ENCODE measurements at regions of chr1 and their contacts with region 1.

Region 1: DNA sequence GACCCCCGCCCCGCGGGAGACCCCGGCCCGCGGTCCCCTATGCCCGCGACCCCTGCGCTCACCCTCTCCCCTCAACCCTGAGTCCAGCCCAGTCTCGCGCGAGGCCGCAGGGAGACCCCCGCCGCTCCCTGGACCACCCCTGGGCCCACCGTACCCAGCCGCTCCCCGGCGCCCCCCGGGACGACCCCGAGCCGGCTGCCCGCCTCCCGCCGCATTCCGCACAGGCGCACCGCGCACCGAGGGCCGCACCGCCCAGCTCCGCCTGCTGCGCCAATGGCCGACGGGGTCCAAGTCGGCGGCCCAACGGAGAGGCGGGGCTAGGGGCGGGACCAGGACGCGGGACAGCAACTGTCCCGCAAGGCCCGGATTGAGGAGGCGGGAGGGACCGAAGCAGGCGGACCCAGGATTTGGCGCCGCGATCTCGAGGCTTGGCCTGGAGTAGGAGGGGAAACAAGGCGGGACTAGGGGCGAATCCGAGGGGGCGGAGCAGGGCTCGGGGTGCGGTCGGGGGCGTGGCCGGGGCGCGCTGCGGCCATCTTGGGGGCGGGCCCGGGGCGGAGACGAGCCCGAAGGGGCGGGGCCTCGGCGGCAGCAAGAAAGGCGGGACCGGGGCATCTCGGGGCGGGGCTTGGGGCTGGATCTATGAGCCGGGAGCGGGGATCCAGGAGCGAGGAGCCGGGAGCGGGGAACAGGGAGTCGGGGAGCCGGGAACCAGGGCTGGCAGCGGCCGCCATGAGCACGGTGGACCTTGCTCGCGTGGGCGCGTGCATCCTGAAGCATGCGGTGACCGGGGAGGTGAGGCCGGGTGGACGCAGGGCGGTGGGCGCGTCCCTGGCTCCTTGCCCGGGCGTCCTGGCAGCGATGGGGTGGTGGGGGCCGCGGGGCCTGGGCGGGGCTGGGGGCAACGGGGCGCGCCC is at the start of gene PRXL2B:
- DNase-seq: peak; percentile 98
- H3K4me3 Mint-ChIP-seq: peak within 1 kb of the TSS; percentile 86
- H3K27ac Mint-ChIP-seq: peak within 1 kb of the TSS; percentile 94
- H3K4me1 Mint-ChIP-seq: peaks cover 40% of the 10 kb centered on the region
- H3K27me3 Mint-ChIP-seq: no peaks in the 10 kb centered on the region
- total RNA-seq, gene PRXL2B: 39.5 and 42.1 TPM in 2 replicates

Region 2: DNA sequence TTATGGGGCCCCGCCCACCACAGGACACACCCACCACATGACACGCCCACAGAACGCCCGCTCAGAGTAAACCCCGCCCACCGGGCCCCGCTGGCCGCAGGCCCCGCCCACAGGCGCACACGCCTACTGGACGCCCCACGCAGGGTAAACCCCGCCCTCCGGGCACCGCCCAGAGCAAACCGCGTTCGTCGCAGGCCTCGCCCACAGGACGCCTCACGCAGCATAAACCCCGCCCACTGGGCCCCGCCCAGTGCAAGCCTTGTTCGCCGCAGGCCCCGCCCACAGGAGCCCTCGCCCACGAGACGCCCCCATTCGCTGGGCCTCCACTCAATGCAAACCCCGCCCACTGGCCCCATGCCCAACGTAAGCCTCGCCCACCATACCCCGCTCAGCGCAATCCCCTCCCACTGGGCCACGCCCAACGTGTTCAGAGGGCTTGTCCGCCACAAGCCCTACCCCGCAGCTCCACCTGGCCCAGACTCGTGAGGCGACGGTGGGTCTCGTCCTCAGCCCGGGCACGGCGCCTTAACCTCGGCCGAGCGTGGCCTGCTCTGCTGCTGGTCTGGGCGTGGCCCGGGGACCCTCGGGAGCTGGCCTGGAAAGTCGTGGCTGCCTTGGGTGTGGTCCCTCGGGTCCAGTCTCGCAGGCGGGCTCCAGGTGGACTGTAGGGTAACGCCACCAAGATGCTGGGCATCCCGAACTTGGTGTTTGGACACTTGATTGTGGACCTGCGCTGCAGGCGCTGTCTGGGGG is 666.9 kb before region 1 on chr1:
- intact Hi-C with region 1: loop called (anchors 2 kb)
- DNase-seq: peak; percentile 99
- H3K4me3 Mint-ChIP-seq: peak overlapping the region; percentile 64
- H3K27ac Mint-ChIP-seq: peak overlapping the region; percentile 70
- H3K4me1 Mint-ChIP-seq: no peaks in the 10 kb centered on the region
- H3K27me3 Mint-ChIP-seq: peaks cover 2% of the 10 kb centered on the region

Region 3: GRCh38 chr1:2205191-2205952 is 381.0 kb before region 1 on chr1:
- intact Hi-C with region 1: loop called (anchors 2 kb)
- DNase-seq: peak; percentile 85
- H3K4me3 Mint-ChIP-seq: peak overlapping the region; percentile 37
- H3K27ac Mint-ChIP-seq: no peak overlapping the region
- H3K4me1 Mint-ChIP-seq: no peaks in the 10 kb centered on the region
- H3K27me3 Mint-ChIP-seq: no peaks in the 10 kb centered on the region

Region 4: DNA sequence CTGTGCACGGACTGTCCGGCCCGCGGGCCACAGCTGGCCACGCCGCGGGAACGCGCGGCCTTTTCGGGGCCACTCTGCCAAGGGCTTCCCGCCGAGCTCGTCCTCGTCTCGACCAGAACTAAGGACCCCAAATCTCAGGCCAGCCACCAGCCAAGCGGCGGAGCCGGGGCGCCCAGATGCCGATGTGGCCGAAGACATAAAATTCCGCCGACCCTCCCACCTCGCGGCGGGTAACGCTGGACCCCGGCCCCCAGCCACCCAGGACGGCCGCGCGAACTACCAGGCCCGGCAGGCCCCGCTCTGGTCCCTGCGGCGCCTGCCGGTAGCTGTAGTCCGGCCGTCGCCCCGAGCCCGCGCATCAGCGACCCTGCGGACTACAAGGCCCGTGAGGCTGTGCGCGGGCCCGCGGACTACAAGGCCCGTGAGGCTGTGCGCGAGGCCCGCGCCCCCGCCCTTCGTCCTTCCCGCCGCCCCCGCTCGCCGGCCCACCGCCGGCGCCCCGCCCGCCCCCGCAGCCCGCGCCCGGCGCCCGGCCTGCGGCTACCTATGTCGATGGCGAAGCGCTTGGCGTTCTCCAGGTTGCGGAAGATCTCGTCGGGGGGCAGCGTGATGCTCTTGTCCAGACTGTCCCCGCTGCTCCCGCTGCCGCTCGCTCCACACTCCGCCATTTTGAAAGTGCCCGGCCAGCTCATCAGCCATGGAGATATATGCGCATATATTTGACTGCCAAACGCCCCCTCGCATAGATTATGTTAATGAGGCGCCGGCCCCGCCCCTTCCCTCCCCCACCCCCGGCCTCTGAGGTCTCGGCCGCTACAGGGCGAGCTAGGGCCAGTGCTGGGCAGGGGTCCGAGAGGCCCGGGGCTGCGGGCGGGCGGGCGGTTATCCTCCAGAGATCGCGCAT is 60.2 kb before region 1 on chr1 and contains the start of gene PANK4:
- intact Hi-C with region 1: loop called (anchors 1 kb)
- DNase-seq: peak; percentile 86
- H3K4me3 Mint-ChIP-seq: peak within 1 kb of the TSS; percentile 94
- H3K27ac Mint-ChIP-seq: peak within 1 kb of the TSS; percentile 98
- H3K4me1 Mint-ChIP-seq: peaks cover 38% of the 10 kb centered on the region
- H3K27me3 Mint-ChIP-seq: peaks cover 15% of the 10 kb centered on the region
- total RNA-seq, gene PANK4: 65.6 and 67.6 TPM in 2 replicates

Region 5: GRCh38 chr1:2556277-2556677 is 30.1 kb before region 1 on chr1 and contains the start of gene TNFRSF14:
- intact Hi-C with region 1: loop called (anchors 1 kb)
- DNase-seq: peak; percentile 73
- H3K4me3 Mint-ChIP-seq: peak within 1 kb of the TSS; percentile 88
- H3K27ac Mint-ChIP-seq: peak within 1 kb of the TSS; percentile 86
- H3K4me1 Mint-ChIP-seq: peaks cover 21% of the 10 kb centered on the region
- H3K27me3 Mint-ChIP-seq: no peaks in the 10 kb centered on the region
- total RNA-seq, gene TNFRSF14: 207 and 215 TPM in 2 replicates

Region 6: GRCh38 chr1:2623571-2624337 is 37.3 kb after region 1 on chr1:
- intact Hi-C with region 1: no loop called
- DNase-seq: no peak
- H3K4me3 Mint-ChIP-seq: no peak overlapping the region
- H3K27ac Mint-ChIP-seq: no peak overlapping the region
- H3K4me1 Mint-ChIP-seq: no peaks in the 10 kb centered on the region
- H3K27me3 Mint-ChIP-seq: peaks cover 24% of the 10 kb centered on the region

Region 7: DNA sequence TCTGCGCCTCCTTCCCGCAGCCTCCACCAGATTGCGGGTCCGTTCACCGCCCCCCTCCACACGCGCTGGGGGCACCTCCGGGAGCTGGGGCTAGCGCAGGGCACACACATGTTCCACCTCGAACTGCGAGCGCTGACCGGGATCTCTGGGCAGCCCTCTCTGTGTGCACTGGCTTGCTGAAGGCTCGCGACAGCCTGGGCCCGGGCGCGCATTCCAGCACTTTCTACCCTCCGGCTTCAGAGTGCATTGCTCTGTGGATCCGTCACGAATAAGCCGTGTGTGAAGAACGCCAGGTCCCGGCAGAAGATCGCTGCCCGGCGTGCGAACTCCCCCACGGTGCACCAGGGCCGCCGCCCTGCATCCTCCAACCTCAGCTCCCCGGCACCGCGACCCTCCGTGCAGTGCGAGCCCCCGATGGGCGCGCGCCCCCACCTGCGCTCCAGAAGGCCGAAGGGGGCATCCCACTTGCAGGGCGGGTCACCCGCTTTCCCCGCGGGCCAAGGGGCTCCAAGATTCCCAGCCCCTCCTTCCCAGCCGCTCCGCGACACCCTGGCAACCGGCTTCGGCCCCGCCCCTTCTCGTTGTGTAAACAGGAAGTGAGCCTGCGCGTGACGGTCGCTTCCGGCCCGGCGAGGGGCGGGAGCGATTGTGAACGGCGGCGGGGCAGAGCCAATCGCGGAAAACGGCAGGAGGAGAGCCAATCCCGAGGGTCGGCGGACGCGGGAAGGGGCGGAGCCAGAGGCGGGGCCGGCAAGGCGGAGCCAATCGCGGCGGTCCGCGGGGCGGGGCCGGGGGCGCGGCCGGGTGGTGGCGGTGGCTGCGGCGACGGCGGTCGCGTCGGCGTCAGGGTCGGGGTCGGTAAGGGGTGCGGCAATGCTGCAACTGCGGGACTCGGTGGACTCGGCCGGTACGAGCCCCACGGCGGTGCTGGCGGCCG is 1038.1 kb after region 1 on chr1 and contains the start of gene TPRG1L:
- intact Hi-C with region 1: loop called (anchors 10 kb)
- DNase-seq: peak; percentile 98
- H3K4me3 Mint-ChIP-seq: peak within 1 kb of the TSS; percentile 94
- H3K27ac Mint-ChIP-seq: peak within 1 kb of the TSS; percentile 93
- H3K4me1 Mint-ChIP-seq: peaks cover 27% of the 10 kb centered on the region
- H3K27me3 Mint-ChIP-seq: peaks cover 8% of the 10 kb centered on the region
- total RNA-seq, gene TPRG1L: 10.3 and 12.5 TPM in 2 replicates

Measured in activated T-helper 1 cell treated with anti-CD3 and anti-CD28 coated beads, Interleukin-12 subunit alpha, Interleukin-12 subunit beta, Interleukin-2, Interleukin-4 antibody, amounts not matched to agents 30 ng/mL and 10 ng/mL and 1 ng/mL, durations not matched to agents 14 hours and 24 hours and 36 hours (primary cell).